ENCODE measurements at regions of chr9 and their contacts with region 1.

Region 1: DNA sequence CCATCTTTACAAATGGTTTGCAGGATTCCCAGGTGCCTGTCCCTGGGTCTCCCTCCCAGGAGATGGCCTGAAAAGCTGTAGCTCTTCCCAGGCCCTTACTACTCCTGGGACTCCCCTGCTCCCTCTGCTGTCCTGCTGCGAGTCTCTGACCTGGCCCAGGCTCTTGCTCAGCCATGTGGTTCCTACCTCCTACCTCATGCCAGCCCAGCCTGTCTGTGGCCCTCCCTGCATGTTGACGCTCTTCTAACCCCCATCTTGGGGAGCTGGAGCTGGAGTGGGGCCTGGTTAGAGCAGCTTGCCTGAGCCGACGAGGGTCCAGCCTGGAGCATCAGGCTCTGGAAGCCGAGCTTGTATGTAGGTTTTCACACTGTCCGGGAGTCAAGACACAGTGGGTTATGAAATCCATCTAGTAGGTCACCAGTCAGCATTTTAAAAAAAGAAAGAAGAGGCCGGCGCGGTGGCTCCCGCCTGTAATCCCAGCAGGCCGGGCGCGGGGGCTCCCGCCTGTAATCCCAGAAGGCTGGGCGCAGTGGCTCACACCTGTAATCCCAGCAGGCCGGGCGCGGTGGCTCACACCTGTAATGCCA is 244.4 kb downstream of the FANCC start:
- DNase-seq: no peak
- H3K4me3 ChIP-seq: no peak overlapping the region
- H3K27ac ChIP-seq: no peak overlapping the region
- H3K4me1 ChIP-seq: no peaks in the 10 kb centered on the region
- H3K27me3 ChIP-seq: no peaks in the 10 kb centered on the region
- CTCF ChIP-seq: peak; percentile 31; the same call in 1 of the 2 replicates

Region 2: DNA sequence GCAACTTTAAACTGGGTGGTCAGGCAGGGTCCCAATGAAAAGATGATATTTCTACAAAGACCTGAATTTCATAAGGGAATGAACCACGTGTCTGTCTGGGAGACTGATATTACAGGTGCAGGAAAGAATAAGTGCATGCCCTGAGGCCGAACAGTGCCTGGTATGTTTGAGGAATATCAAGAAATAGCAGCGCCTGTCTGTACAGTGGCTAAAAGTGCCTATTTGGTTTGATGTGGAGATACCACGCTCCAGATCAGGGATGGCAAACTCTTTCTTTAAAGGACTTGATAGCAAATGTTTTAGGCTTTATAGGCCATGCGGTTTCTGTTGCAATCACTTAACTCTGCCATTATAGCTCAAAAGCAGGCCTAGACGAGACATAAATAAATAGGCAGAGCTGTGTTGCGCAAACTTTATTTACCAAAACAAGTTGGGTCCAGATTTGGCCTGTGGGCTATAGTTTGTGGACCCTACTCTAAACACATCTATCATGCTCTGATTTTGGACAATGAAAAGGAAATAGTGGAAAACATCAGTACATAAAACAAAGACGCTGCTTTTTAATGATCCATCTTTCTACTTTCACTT is 364.4 kb after region 1 on chr9:
- CTCF ChIA-PET with region 1: no interaction called
- POLR2A ChIA-PET with region 1: interaction called, 14 read pairs
- intact Hi-C with region 1: no loop called
- DNase-seq: no peak
- H3K4me3 ChIP-seq: no peak overlapping the region
- H3K27ac ChIP-seq: no peak overlapping the region
- H3K4me1 ChIP-seq: no peaks in the 10 kb centered on the region
- H3K27me3 ChIP-seq: no peaks in the 10 kb centered on the region
- CTCF ChIP-seq: no peak

Measured in A673 (cell line).